MCF 10A (cell line): ENCODE measurements at regions of chr4 and their contacts with region 1.

Region 1: GRCh38 chr4:87375719-87376291 is 15.2 kb downstream of the HSD17B11 start:
- DNase-seq: peak; percentile 78
- H3K4me3 Mint-ChIP-seq: no peak overlapping the region
- H3K27ac Mint-ChIP-seq: peak overlapping the region; percentile 23
- H3K4me1 Mint-ChIP-seq: no peaks in the 10 kb centered on the region
- H3K27me3 Mint-ChIP-seq: no peaks in the 10 kb centered on the region
- CTCF ChIP-seq: peak; percentile 42

Region 2: GRCh38 chr4:87270144-87270543 is 105.7 kb before region 1 on chr4:
- CTCF ChIA-PET with region 1: interaction called, 4 read pairs
- POLR2A ChIA-PET with region 1: no interaction called
- intact Hi-C with region 1: loop called (anchors 1 kb)
- DNase-seq: peak; percentile 63
- H3K4me3 Mint-ChIP-seq: no peak overlapping the region
- H3K27ac Mint-ChIP-seq: no peak overlapping the region
- H3K4me1 Mint-ChIP-seq: no peaks in the 10 kb centered on the region
- H3K27me3 Mint-ChIP-seq: no peaks in the 10 kb centered on the region
- CTCF ChIP-seq: peak; percentile 59

Region 3: GRCh38 chr4:87363567-87363966 is 12.2 kb before region 1 on chr4:
- CTCF ChIA-PET with region 1: interaction called, 49 read pairs
- POLR2A ChIA-PET with region 1: interaction called, 3 read pairs
- intact Hi-C with region 1: no loop called
- DNase-seq: no peak
- H3K4me3 Mint-ChIP-seq: no peak overlapping the region
- H3K27ac Mint-ChIP-seq: peak overlapping the region; percentile 7
- H3K4me1 Mint-ChIP-seq: no peaks in the 10 kb centered on the region
- H3K27me3 Mint-ChIP-seq: no peaks in the 10 kb centered on the region
- CTCF ChIP-seq: no peak

Region 4: DNA sequence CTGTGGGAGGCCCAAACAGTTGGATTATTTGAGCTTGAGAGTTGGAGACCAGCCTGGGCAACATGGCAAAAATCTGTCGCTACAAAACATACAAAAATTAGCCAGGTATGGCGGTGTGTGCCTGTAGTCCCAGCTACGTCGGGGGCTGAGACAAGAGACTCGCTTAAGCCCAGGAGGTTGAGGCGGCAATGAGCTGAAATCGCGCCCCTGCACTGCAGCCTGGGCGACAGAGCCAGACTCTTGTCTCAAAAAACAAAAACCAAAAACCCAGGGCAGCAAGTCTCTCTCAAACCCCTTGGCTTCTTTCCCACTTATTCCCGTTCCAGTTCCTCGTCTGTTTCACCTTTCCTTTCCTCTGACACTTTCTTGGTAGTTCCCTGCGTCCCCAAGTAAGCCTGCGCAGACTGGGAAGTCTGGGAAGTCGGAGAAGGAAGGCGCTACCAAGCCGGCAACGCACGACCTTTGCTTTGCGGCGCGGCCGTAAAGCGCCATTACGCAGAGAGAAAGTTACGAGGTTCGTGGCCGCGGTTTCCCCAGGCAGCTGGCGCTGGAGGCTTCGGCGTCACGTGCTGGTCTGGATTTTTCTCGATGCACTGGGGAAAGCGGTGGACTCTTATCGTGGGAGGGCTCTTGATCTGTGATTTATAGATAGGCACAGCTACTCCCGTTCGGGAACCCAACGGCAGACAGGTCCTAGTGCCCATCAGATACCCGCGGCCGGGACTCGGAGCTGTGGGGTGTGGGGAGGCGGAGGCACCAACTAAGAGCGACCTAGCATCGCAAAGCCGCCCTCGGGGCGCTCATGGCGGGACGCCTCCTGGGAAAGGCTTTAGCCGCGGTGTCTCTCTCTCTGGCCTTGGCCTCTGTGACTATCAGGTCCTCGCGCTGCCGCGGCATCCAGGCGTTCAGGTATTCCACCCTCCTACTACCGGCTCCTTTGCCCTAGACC is 46.6 kb after region 1 on chr4 and contains the start of gene NUDT9:
- CTCF ChIA-PET with region 1: interaction called, 6 read pairs
- POLR2A ChIA-PET with region 1: interaction called, 6 read pairs
- intact Hi-C with region 1: loop called (anchors 1 kb)
- DNase-seq: peak; percentile 94
- H3K4me3 Mint-ChIP-seq: peak within 1 kb of the TSS; percentile 98
- H3K27ac Mint-ChIP-seq: peak within 1 kb of the TSS; percentile 100
- H3K4me1 Mint-ChIP-seq: peaks cover 9% of the 10 kb centered on the region
- H3K27me3 Mint-ChIP-seq: no peaks in the 10 kb centered on the region
- CTCF ChIP-seq: no peak
- total RNA-seq, gene NUDT9: 17.6 and 22.5 TPM in 2 replicates

Region 5: GRCh38 chr4:87838890-87839591 is 463.2 kb after region 1 on chr4:
- CTCF ChIA-PET with region 1: interaction called, 10 read pairs
- POLR2A ChIA-PET with region 1: interaction called, 3 read pairs
- intact Hi-C with region 1: loop called (anchors 2 kb)
- DNase-seq: peak; percentile 49
- H3K4me3 Mint-ChIP-seq: no peak overlapping the region
- H3K27ac Mint-ChIP-seq: no peak overlapping the region
- H3K4me1 Mint-ChIP-seq: peaks cover 10% of the 10 kb centered on the region
- H3K27me3 Mint-ChIP-seq: no peaks in the 10 kb centered on the region
- CTCF ChIP-seq: peak; percentile 75